ENCODE measurements at regions of chr1 and their contacts with region 1.

Region 1: GRCh38 chr1:200738740-200739498 is at the start of gene CAMSAP2:
- DNase-seq: peak; percentile 91 to 97 (median 94)
- H3K4me3 ChIP-seq: peak within 1 kb of the TSS; percentile 31 to 95 (median 62)
- H3K27ac ChIP-seq: peak within 1 kb of the TSS; percentile 80 to 100 (median 100)
- H3K4me1 ChIP-seq: peaks cover 23 to 44% of the 10 kb centered on the region in 2 donors
- H3K27me3 ChIP-seq: no peaks in the 10 kb centered on the region
- CTCF ChIP-seq: no peak
- POLR2A ChIP-seq: peak; percentile 84 to 92
- total RNA-seq, gene CAMSAP2: 22.3 to 62.6 (median 34.6) TPM

Region 2: GRCh38 chr1:200620273-200621131 is 118.4 kb before region 1 on chr1 and contains the start of gene KIF14:
- intact Hi-C with region 1: loop called in 1 of 2 experiments (anchors 10 kb)
- DNase-seq: peak; percentile 92 to 97 (median 95)
- H3K4me3 ChIP-seq: peak within 1 kb of the TSS in 3 of 4 donors; percentile 7 to 59 (median 48)
- H3K27ac ChIP-seq: peak within 1 kb of the TSS; percentile 10 to 73 (median 63)
- H3K4me1 ChIP-seq: peaks cover 14 to 29% of the 10 kb centered on the region in 2 donors
- H3K27me3 ChIP-seq: no peaks in the 10 kb centered on the region
- CTCF ChIP-seq: peak in 1 of 6 experiments; percentile 9
- POLR2A ChIP-seq: peak in 1 of 2 donors; percentile 40
- total RNA-seq, gene KIF14: 0.11 to 3.5 (median 0.36) TPM

Region 3: DNA sequence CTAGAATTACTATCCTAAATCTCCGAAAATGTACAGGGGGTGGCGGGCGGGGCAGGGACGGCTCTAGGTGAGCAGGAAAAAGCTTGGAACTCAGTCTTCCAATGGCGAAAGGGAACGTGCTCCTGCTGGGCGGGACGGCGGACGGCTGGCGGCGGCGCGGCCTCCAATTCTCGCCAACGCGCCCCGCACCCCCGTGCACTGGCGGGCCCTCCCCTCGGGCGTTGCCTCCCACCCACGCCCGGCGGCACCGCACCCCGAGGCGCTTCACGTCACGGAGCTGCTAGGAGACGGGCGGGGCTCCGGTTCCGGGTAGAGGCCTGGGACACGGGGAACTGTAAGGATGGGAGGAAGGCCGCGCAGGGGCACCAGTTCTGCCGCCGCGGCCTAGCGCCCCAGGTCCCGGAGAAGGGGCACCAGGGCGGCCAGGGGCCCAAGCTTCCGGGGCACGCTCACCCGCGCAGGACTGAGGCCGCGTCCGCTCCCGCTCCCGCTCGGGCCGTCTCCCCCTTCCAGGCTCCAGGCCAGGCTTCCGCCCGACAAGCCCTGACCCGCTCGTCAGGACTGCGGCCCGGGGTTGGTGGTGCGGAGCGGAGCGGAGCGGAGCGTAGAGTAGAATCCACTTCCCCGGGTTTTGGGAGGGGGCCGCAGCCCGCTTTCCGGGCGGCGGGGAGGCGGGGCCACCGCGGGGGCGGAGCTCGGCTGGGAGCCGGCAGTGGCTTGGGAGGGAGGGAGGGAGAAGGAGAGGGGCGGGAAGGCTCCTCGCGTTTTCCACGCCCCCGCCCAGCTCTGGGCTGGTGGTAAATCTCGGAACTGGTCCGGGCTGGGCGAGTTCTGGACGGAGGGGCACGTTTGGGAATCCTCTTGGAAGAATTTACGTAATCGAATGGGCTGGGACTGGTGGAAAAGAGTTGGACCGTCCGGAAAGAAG is 69.3 kb before region 1 on chr1 and contains the start of gene DDX59:
- intact Hi-C with region 1: loop called in 1 of 2 experiments (anchors 2 kb)
- DNase-seq: peak; percentile 96 to 98 (median 97)
- H3K4me3 ChIP-seq: peak within 1 kb of the TSS; percentile 2 to 76 (median 53)
- H3K27ac ChIP-seq: peak within 1 kb of the TSS; percentile 93 to 100 (median 99)
- H3K4me1 ChIP-seq: peaks cover 10 to 27% of the 10 kb centered on the region in 2 donors
- H3K27me3 ChIP-seq: no peaks in the 10 kb centered on the region
- CTCF ChIP-seq: peak in 1 of 6 experiments; percentile 15
- POLR2A ChIP-seq: peak; percentile 91 to 92
- total RNA-seq, gene DDX59: 13.5 to 32.0 (median 23.1) TPM

Region 4: GRCh38 chr1:200795156-200795555 is 56.2 kb after region 1 on chr1:
- intact Hi-C with region 1: loop called in 1 of 2 experiments (anchors 10 kb)
- DNase-seq: no peak
- H3K4me3 ChIP-seq: no peak overlapping the region
- H3K27ac ChIP-seq: peak overlapping the region in 2 of 5 donors; percentile 11 to 26
- H3K4me1 ChIP-seq: peaks cover 0 to 21% of the 10 kb centered on the region in 2 donors
- H3K27me3 ChIP-seq: no peaks in the 10 kb centered on the region
- CTCF ChIP-seq: no peak
- POLR2A ChIP-seq: no peak